H1 (cell line): ENCODE measurements at regions of chr17 and their contacts with region 1.

Region 1: GRCh38 chr17:81890447-81891299 is 713 bp downstream of the ALYREF start:
- DNase-seq: no peak
- H3K4me3 ChIP-seq: peak overlapping the region; percentile 80 to 94 (median 88)
- H3K27ac ChIP-seq: peak overlapping the region; percentile 83
- H3K4me1 ChIP-seq: peaks cover 0 to 3% (median 2%) of the 10 kb centered on the region in 4 experiments; a peak in 5 of 7 replicates
- H3K27me3 ChIP-seq: no peaks in the 10 kb centered on the region
- CTCF ChIP-seq: no peak
- EP300 ChIP-seq: no peak
- POLR2A ChIP-seq: 0 out of 3 replicates have a peak, but pooled peaks of 1 of the 2 experiments have one; percentile 21
- RAD21 ChIP-seq: no peak

Region 2: DNA sequence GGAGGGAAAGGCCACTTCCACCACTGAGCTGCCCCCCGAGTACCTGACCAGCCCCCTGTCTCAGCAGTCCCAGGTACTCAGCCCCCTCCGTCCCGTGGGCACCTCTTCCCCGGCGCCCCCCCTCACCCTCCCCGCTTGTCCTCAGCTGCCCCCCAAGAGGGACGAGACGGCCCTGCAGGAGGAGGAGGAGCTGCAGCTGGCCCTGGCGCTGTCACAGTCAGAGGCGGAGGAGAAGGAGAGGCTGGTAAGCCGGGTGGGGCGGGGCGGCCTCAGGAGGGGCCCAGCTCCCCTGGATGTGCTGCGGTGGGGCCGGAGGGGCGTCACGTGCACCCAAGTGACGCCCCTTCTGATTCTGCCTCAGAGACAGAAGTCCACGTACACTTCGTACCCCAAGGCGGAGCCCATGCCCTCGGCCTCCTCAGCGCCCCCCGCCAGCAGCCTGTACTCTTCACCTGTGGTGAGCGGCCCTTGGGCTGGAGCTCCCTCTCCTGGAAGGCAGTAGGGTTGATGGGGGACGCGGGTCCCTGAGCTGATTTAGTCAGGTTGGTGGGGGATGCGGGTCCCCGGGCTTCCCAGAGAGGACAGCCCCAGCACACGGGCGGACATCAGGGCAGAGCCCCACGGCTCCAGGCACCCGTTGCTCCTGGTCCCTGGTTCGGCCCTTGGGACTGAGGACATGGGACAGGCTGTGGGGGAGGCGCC is 197.0 kb before region 1 on chr17:
- CTCF ChIA-PET with region 1: no interaction called
- POLR2A ChIA-PET with region 1: no interaction called
- DNase-seq: peak in 1 of 2 experiments; percentile 67
- H3K4me3 ChIP-seq: no peak overlapping the region
- H3K27ac ChIP-seq: no peak overlapping the region
- H3K4me1 ChIP-seq: no peaks in the 10 kb centered on the region
- H3K27me3 ChIP-seq: no peaks in the 10 kb centered on the region
- CTCF ChIP-seq: peak; percentile 55 to 88 (median 59)
- EP300 ChIP-seq: no peak
- POLR2A ChIP-seq: no peak
- RAD21 ChIP-seq: peak; percentile 42 to 62; a peak in 3 of 4 replicates

Region 3: DNA sequence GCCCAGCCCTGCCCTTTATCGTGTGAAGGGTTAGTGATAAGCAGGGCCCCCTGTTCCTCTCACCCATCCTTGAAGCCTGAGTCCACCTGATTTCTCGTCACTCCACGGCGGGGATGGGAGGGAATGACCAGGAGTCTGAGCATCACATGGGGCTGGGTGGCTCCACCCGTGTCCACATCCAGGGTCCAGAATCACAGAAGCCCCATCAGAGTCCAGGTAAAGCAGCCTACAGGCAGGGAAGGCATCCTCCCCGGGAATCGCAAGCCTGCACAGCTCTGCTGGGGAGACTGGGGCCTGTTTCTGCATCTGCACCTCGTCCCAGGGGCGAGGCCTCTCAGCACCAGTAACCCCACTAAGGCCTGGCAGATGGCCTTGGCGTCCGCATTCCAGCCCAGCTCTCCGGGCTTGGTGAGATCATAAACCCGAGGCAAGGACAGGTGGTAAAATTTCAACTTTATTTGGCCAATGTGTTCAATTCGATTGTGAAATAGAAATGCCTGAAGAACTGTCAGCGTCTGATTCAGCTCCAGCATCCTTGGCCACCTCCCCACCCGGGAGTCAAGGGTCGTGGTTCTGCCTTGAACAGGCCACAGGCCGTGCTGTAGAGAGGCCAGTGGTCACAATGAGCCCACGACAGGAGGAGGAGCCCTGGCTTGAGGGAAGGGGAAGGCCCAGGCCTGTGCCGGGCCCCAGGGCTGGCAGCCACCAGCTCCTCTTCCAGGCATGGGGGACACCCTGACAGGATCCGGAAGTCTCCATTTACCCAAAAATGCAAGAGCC is 47.8 kb before region 1 on chr17:
- CTCF ChIA-PET with region 1: no interaction called
- POLR2A ChIA-PET with region 1: no interaction called
- DNase-seq: no peak
- H3K4me3 ChIP-seq: no peak overlapping the region
- H3K27ac ChIP-seq: no peak overlapping the region
- H3K4me1 ChIP-seq: peaks cover 0 to 3% (median 0%) of the 10 kb centered on the region in 4 experiments; a peak in 2 of 7 replicates
- H3K27me3 ChIP-seq: no peaks in the 10 kb centered on the region; a peak in 2 of 7 replicates
- CTCF ChIP-seq: no peak
- EP300 ChIP-seq: no peak
- POLR2A ChIP-seq: no peak
- RAD21 ChIP-seq: no peak

Region 4: DNA sequence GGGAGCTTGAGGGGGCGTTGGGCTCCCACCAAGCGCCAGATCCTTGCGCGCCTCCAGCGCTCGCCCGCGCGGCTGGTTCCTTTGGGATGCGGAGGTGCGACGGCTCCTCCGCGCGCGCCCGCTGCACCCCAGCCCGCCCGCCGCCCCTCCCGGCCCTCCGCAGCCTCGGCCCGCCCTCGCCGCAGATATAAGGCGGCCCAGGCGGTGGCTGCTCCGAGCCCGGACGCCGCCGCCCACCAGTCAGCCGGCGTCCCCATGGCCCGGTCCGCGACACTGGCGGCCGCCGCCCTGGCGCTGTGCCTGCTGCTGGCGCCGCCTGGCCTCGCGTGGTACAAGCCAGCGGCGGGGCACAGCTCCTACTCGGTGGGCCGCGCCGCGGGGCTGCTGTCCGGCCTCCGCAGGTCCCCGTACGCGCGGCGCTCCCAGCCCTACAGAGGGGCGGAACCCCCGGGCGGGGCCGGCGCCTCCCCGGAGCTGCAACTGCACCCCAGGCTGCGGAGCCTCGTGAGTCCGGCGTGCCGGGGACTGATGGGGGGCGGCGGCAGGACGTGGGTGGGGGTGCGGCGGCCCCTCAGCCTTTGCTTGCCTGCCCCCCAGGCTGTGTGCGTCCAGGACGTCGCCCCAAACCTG is 11.5 kb after region 1 on chr17 and contains the start of gene NPB:
- CTCF ChIA-PET with region 1: no interaction called
- POLR2A ChIA-PET with region 1: interaction called, 29 read pairs
- DNase-seq: peak in 1 of 2 experiments; percentile 75
- H3K4me3 ChIP-seq: peak within 1 kb of the TSS; percentile 19 to 61 (median 44)
- H3K27ac ChIP-seq: no peak within 1 kb of the TSS
- H3K4me1 ChIP-seq: peaks cover 0 to 8% (median 2%) of the 10 kb centered on the region in 4 experiments; a peak in 3 of 7 replicates
- H3K27me3 ChIP-seq: peaks cover 0 to 22% (median 14%) of the 10 kb centered on the region in 4 experiments; a peak in 5 of 7 replicates
- CTCF ChIP-seq: no peak
- EP300 ChIP-seq: no peak
- POLR2A ChIP-seq: 0 out of 3 replicates have a peak, but pooled peaks of 1 of the 2 experiments have one; percentile 26
- RAD21 ChIP-seq: no peak
- total RNA-seq, gene NPB: 0.80 and 1.5 TPM in 2 replicates

Region 5: GRCh38 chr17:81917565-81918332 is 27.1 kb after region 1 on chr17 and contains the start of gene SIRT7:
- CTCF ChIA-PET with region 1: interaction called, 4 read pairs
- POLR2A ChIA-PET with region 1: interaction called, 10 read pairs
- DNase-seq: peak in 1 of 2 experiments; percentile 83
- H3K4me3 ChIP-seq: peak within 1 kb of the TSS; percentile 64 to 90 (median 75)
- H3K27ac ChIP-seq: peak within 1 kb of the TSS; percentile 18; the same call in 1 of the 2 replicates
- H3K4me1 ChIP-seq: peaks cover 0 to 13% (median 5%) of the 10 kb centered on the region in 4 experiments; a peak in 6 of 7 replicates
- H3K27me3 ChIP-seq: no peaks in the 10 kb centered on the region
- CTCF ChIP-seq: no peak
- EP300 ChIP-seq: no peak
- POLR2A ChIP-seq: peak in 1 of 2 experiments; percentile 59; a peak in 1 of 3 replicates
- RAD21 ChIP-seq: no peak
- total RNA-seq, gene SIRT7: 16.6 and 18.7 TPM in 2 replicates